H1 (cell line): ENCODE measurements at regions of chr15 and their contacts with region 1.

Region 1: GRCh38 chr15:98668566-98669308 is 20.4 kb downstream of the IGF1R start:
- DNase-seq: no peak
- H3K4me3 ChIP-seq: no peak overlapping the region
- H3K27ac ChIP-seq: no peak overlapping the region
- H3K4me1 ChIP-seq: peaks cover 28 to 48% (median 46%) of the 10 kb centered on the region in 4 experiments
- H3K27me3 ChIP-seq: no peaks in the 10 kb centered on the region
- CTCF ChIP-seq: no peak
- EP300 ChIP-seq: no peak
- POLR2A ChIP-seq: no peak
- RAD21 ChIP-seq: no peak

Region 2: DNA sequence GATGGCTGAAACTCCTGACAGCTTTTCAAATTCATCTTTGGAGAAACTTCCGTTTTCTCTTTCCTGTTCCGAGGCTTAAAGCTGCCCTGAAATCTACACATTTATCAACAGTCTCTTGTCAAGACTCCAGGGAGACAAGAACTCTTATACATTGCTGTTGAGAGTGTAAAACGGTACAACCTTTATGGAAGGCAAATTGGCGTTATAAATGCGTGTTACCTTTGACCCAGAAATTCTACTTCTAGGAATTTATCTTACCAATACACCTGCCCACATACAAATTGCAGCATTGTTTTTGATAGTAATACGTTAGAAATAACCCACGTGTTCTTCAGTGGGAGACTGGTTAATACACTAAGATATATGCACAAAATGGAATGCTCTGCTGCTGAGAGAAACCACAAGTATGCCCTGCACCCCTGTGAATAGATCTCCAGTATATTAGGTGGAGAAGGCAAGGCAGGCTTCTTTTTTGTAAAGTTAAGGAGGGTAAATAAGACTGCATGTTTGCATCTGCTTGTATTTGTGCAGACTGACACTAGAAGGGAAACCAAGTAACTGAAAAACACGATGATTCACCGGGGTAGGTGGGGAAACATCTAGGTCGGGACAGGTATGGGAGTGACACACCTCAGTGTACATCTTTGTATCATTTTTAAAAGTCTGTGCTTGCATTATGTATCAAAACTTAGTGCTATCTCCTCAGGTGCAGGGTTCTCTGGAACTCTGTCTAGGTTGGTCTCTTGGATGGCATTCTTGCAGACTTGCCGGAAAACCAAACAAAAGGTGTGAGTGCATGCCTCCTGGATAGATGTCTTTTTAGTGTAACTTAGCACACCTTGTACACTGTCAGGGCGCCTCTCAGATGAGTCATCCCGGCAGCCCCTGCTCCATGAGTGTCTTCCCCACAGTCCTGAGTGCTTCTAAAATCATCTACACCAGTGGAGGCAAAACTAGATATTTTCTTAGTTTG is 77.2 kb after region 1 on chr15:
- CTCF ChIA-PET with region 1: interaction called, 11 read pairs
- POLR2A ChIA-PET with region 1: no interaction called
- DNase-seq: no peak
- H3K4me3 ChIP-seq: no peak overlapping the region
- H3K27ac ChIP-seq: no peak overlapping the region
- H3K4me1 ChIP-seq: peaks cover 0 to 7% (median 3%) of the 10 kb centered on the region in 4 experiments; a peak in 3 of 7 replicates
- H3K27me3 ChIP-seq: no peaks in the 10 kb centered on the region
- CTCF ChIP-seq: no peak
- EP300 ChIP-seq: no peak
- POLR2A ChIP-seq: no peak
- RAD21 ChIP-seq: no peak